ENCODE measurements at regions of chr9 and their contacts with region 1.

Region 1: GRCh38 chr9:127943731-127944144 is 6.1 kb upstream of the DPM2 start:
- DNase-seq: peak; percentile 81 to 82
- H3K4me3 ChIP-seq: no peak overlapping the region
- H3K4me3 Mint-ChIP-seq: no peak overlapping the region
- H3K27ac Mint-ChIP-seq: no peak overlapping the region
- H3K4me1 ChIP-seq: 0 out of 2 replicates have a peak, but pooled peaks cover 3% of the 10 kb centered on the region
- H3K4me1 Mint-ChIP-seq: no peaks in the 10 kb centered on the region
- H3K27me3 ChIP-seq: no peaks in the 10 kb centered on the region
- H3K27me3 Mint-ChIP-seq: no peaks in the 10 kb centered on the region
- CTCF ChIP-seq: peak; percentile 77 to 89

Region 2: DNA sequence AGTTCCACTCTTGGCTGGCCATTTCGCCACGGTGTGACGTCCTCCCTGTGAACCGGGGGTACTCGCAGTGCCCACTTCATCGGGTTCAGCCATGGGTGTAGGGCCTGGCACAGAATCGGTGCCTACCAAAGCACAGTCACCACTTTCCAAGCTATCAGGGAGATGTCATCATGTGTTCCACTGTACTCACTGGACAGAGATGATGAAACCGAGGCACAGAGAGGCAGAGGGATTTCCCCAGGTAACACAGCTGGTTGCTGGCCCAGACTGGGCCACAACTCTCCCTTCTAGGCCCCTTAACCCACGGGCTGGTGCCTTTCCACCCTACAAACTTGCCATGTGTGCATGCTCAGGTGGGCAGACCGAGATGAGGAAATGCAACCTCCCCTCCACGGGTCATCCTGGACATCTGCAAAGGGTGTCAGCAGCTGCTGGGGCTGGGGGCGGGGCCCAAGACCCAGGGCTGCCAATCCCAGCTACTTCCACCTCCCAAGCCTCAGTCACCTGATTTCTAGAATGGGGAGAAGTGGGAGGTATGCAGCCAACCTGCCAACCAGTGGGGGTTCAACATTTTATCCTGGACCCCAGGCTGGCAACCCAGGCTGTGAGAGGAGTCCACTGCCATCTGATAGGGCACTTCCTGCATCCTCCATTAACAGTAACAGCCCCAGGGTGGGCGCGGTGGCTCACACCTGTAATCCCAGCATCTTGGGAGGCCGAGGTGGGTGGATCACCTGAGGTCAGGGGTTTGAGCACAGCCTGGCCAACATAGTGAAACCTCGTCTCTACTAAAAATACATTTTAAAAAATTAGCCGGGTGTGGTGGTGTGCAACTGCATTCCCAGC is 164.4 kb before region 1 on chr9:
- CTCF ChIA-PET with region 1: no interaction called
- POLR2A ChIA-PET with region 1: no interaction called
- intact Hi-C with region 1: no loop called
- DNase-seq: no peak
- H3K4me3 ChIP-seq: no peak overlapping the region
- H3K4me3 Mint-ChIP-seq: no peak overlapping the region
- H3K27ac Mint-ChIP-seq: no peak overlapping the region
- H3K4me1 ChIP-seq: no peaks in the 10 kb centered on the region
- H3K4me1 Mint-ChIP-seq: no peaks in the 10 kb centered on the region
- H3K27me3 ChIP-seq: no peaks in the 10 kb centered on the region
- H3K27me3 Mint-ChIP-seq: no peaks in the 10 kb centered on the region
- CTCF ChIP-seq: no peak

Region 3: GRCh38 chr9:127887792-127888191 is 55.9 kb before region 1 on chr9:
- CTCF ChIA-PET with region 1: no interaction called
- POLR2A ChIA-PET with region 1: no interaction called
- intact Hi-C with region 1: no loop called
- DNase-seq: no peak
- H3K4me3 ChIP-seq: no peak overlapping the region
- H3K4me3 Mint-ChIP-seq: no peak overlapping the region
- H3K27ac Mint-ChIP-seq: no peak overlapping the region
- H3K4me1 ChIP-seq: no peaks in the 10 kb centered on the region
- H3K4me1 Mint-ChIP-seq: peaks cover 7% of the 10 kb centered on the region
- H3K27me3 ChIP-seq: no peaks in the 10 kb centered on the region
- H3K27me3 Mint-ChIP-seq: no peaks in the 10 kb centered on the region
- CTCF ChIP-seq: peak in 1 of 2 experiments; percentile 14

Region 4: GRCh38 chr9:127930231-127931091 is 13.3 kb before region 1 on chr9 and contains the start of gene PIP5KL1:
- CTCF ChIA-PET with region 1: interaction called, 11 read pairs
- POLR2A ChIA-PET with region 1: no interaction called
- intact Hi-C with region 1: no loop called
- DNase-seq: peak; percentile 87 to 93
- H3K4me3 ChIP-seq: peak within 1 kb of the TSS; percentile 67
- H3K4me3 Mint-ChIP-seq: peak within 1 kb of the TSS; percentile 69
- H3K27ac Mint-ChIP-seq: peak within 1 kb of the TSS; percentile 87
- H3K4me1 ChIP-seq: peaks cover 18% of the 10 kb centered on the region
- H3K4me1 Mint-ChIP-seq: peaks cover 7% of the 10 kb centered on the region
- H3K27me3 ChIP-seq: no peaks in the 10 kb centered on the region
- H3K27me3 Mint-ChIP-seq: no peaks in the 10 kb centered on the region
- CTCF ChIP-seq: no peak
- total RNA-seq, gene PIP5KL1: 2.3 and 3.8 TPM in 2 replicates

Region 5: DNA sequence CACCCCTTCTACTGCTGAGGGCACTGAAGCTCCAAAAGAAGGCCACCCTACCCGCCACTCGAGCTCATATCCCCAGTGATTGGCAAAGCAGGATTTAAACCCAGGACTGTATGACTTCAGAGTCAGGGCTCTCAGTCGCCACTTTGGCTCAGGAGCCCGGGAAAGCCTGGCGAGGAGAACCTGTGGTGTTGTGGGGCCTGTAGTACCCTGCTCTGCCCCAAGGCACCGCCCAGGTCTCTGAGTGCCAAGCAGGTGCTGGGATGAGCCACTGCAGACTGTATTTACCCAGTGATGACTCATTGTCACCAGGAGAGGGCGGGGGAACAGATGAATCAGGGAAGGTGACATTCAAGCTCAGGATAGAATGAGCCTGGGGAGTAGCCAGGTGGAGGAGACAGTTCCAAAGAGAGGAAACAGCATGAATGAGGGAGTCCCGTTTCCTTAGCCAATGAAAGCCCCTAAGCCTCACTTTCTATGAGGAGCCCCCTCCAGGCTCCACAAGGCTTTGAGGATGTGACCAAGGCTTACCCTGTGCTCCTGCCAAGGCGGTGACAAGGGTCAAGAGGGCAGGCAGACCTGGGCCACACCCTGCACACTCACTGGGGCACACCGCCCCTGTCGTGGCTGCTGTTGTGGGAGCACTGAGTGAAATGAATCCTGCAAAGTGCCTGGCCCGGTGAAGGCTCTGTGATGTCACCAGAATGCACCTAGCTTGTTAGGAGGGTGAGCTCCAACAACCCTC is 11.7 kb after region 1 on chr9:
- CTCF ChIA-PET with region 1: interaction called, 10 read pairs
- POLR2A ChIA-PET with region 1: no interaction called
- intact Hi-C with region 1: no loop called
- DNase-seq: peak; percentile 86 to 90
- H3K4me3 ChIP-seq: no peak overlapping the region
- H3K4me3 Mint-ChIP-seq: peak overlapping the region; percentile 58
- H3K27ac Mint-ChIP-seq: peak overlapping the region; percentile 82
- H3K4me1 ChIP-seq: peaks cover 29% of the 10 kb centered on the region
- H3K4me1 Mint-ChIP-seq: peaks cover 12% of the 10 kb centered on the region
- H3K27me3 ChIP-seq: no peaks in the 10 kb centered on the region
- H3K27me3 Mint-ChIP-seq: no peaks in the 10 kb centered on the region
- CTCF ChIP-seq: peak; percentile 64 to 75

Region 6: GRCh38 chr9:127980706-127981558 is 37.2 kb after region 1 on chr9 and contains the start of gene EEIG1:
- CTCF ChIA-PET with region 1: interaction called, 9 read pairs
- POLR2A ChIA-PET with region 1: no interaction called
- intact Hi-C with region 1: loop called (anchors 5 kb)
- DNase-seq: peak; percentile 96 to 98
- H3K4me3 ChIP-seq: peak within 1 kb of the TSS; percentile 87
- H3K4me3 Mint-ChIP-seq: peak within 1 kb of the TSS; percentile 95
- H3K27ac Mint-ChIP-seq: peak within 1 kb of the TSS; percentile 86
- H3K4me1 ChIP-seq: peaks cover 33% of the 10 kb centered on the region
- H3K4me1 Mint-ChIP-seq: peaks cover 16% of the 10 kb centered on the region
- H3K27me3 ChIP-seq: no peaks in the 10 kb centered on the region
- H3K27me3 Mint-ChIP-seq: no peaks in the 10 kb centered on the region
- CTCF ChIP-seq: no peak
- total RNA-seq, gene EEIG1: 44.1 and 47.1 TPM in 2 replicates

Region 7: DNA sequence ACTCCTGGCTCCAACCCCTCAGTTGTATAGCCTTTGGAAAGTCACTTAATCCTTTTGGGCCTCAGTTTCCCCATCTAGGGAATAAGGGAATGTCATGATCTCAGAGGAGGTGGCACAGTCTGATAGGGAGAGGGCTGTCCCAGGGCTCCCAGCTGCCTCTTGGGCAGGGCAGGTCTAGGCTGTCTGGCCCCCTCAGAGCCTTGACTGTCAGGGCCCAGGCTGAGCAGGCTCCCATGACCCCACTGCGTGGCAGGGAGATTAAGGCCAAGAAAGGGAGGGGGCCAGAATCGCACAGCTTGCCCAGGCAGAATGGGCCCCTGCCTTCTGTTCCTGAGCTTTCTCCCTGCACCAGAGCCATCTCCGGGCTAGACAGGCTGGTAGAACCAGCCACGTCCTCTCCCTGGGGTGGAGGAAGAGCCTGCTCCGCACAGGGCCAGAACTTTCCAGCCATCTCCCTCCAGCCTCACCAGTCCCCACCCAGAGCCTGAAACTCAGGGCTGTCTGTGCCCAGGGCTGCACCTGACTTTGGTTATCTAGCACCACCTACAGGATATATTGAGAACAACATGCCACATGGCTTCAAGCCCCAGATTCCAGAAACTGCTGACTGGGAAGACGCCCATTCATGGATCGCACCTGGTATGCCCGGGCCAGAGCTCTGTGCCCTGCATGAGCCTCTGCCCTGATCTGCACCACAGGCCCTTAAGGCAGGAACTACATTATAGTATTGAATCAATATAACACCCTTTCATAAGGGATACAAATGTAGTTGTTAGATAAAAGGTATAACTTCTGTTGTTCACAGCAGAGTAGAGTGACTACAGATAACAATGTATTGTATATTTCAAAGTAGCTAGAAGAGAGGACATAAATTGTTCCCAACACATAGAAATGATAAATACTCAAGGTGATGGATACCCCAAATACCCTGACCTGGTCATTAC is 91.4 kb after region 1 on chr9:
- CTCF ChIA-PET with region 1: interaction called, 16 read pairs
- POLR2A ChIA-PET with region 1: no interaction called
- intact Hi-C with region 1: loop called (anchors 1 kb)
- DNase-seq: peak; percentile 76 to 80
- H3K4me3 ChIP-seq: no peak overlapping the region
- H3K4me3 Mint-ChIP-seq: no peak overlapping the region
- H3K27ac Mint-ChIP-seq: no peak overlapping the region
- H3K4me1 ChIP-seq: no peaks in the 10 kb centered on the region
- H3K4me1 Mint-ChIP-seq: no peaks in the 10 kb centered on the region
- H3K27me3 ChIP-seq: no peaks in the 10 kb centered on the region
- H3K27me3 Mint-ChIP-seq: no peaks in the 10 kb centered on the region
- CTCF ChIP-seq: peak; percentile 64 to 85

Region 8: GRCh38 chr9:128067876-128068613 is 124.3 kb after region 1 on chr9 and contains the start of gene SLC25A25:
- CTCF ChIA-PET with region 1: interaction called, 10 read pairs
- POLR2A ChIA-PET with region 1: no interaction called
- intact Hi-C with region 1: no loop called
- DNase-seq: peak; percentile 100
- H3K4me3 ChIP-seq: peak within 1 kb of the TSS; percentile 77
- H3K4me3 Mint-ChIP-seq: no peak within 1 kb of the TSS
- H3K27ac Mint-ChIP-seq: peak within 1 kb of the TSS; percentile 63
- H3K4me1 ChIP-seq: peaks cover 24% of the 10 kb centered on the region
- H3K4me1 Mint-ChIP-seq: peaks cover 19% of the 10 kb centered on the region
- H3K27me3 ChIP-seq: no peaks in the 10 kb centered on the region
- H3K27me3 Mint-ChIP-seq: no peaks in the 10 kb centered on the region
- CTCF ChIP-seq: no peak
- total RNA-seq, gene SLC25A25: 16.5 and 18.5 TPM in 2 replicates

Region 9: GRCh38 chr9:128117613-128118471 is 174.1 kb after region 1 on chr9:
- CTCF ChIA-PET with region 1: interaction called, 3 read pairs
- POLR2A ChIA-PET with region 1: no interaction called
- intact Hi-C with region 1: loop called (anchors 1 kb)
- DNase-seq: peak; percentile 91 to 94
- H3K4me3 ChIP-seq: no peak overlapping the region
- H3K4me3 Mint-ChIP-seq: peak overlapping the region; percentile 18
- H3K27ac Mint-ChIP-seq: no peak overlapping the region
- H3K4me1 ChIP-seq: peaks cover 28% of the 10 kb centered on the region
- H3K4me1 Mint-ChIP-seq: peaks cover 15% of the 10 kb centered on the region
- H3K27me3 ChIP-seq: no peaks in the 10 kb centered on the region
- H3K27me3 Mint-ChIP-seq: no peaks in the 10 kb centered on the region
- CTCF ChIP-seq: peak; percentile 100

Region 10: DNA sequence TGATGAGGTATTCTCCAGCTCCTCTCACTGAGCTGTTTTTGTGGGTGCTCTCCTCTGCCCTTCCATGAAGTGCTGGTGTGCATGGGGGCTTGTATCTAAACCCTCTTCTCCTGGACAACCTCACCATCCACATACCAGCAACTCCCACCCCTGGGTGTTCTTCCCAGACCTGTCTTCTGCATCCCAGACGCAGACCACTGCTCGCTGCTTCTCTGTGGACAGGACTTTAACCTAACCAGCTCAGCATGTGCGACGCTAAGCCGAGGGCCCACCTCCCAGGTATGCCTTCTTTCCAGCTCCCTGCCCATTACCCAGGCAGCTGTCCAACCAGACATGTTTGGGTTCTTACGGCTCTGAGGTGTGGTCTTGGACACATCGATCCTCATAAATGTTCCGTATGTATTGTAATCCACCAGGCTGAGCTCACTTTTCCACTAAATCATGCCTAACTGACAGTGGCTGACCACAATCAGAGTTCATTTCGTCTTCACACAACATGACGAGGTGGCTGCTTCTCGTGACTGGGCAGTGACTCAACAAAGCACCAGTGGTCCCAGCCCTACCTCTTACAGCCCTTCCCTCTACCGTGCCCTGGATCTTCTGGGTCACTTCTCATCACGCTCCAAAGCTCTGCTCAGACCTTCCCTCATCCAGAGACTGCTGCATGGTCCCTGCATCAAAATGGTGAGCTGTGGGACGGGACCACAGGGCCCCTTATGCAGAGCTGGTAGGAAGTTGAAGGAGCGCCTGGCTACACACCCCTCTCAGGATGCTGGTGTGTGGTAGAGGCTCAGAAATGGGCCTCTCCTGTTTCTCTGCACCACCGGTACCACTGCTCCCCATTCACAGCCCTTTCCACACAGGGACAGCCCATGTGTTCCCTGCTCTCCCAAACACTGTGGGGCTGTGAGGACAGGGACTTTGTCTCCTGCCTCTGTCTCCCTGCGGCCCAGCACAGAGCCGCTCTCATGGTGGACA is 193.4 kb after region 1 on chr9:
- CTCF ChIA-PET with region 1: no interaction called
- POLR2A ChIA-PET with region 1: no interaction called
- intact Hi-C with region 1: no loop called
- DNase-seq: peak in 1 of 2 experiments; percentile 14
- H3K4me3 ChIP-seq: no peak overlapping the region
- H3K4me3 Mint-ChIP-seq: no peak overlapping the region
- H3K27ac Mint-ChIP-seq: no peak overlapping the region
- H3K4me1 ChIP-seq: no peaks in the 10 kb centered on the region
- H3K4me1 Mint-ChIP-seq: no peaks in the 10 kb centered on the region
- H3K27me3 ChIP-seq: no peaks in the 10 kb centered on the region
- H3K27me3 Mint-ChIP-seq: no peaks in the 10 kb centered on the region
- CTCF ChIP-seq: no peak

Measured in Caco-2 (cell line).